GM23248 (cell line): ENCODE measurements at regions of chr4 and their contacts with region 1.

Region 1: DNA sequence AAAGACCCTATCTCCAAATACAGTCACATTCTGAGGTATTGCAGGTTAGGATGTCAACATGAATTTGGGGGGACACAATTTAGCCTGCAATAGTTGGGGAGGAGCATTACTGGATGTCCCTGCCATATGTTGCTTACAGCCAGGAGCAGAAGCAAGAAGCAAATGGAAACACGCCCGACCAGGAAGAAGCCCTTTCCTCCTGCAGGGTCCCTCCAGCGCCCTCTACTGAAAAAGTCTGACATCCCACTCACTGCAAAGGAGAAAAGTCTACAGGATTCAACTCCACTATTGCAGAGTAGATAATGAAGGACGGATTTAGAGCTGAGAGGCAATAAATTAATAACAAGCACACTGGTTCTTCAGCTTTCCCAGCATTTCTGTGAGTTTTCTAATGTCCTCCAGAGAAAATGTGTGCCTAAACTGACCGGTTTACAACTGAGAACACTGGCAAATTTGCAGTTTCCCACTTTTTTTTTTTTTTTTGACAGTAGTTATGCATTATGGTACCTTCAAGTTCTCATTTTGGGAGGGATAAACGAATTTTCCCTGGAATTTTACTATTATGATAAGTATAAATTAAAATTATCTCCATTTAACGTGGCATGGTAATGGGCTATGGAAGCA is 31.7 kb downstream of the COQ2 start:
- DNase-seq: peak; percentile 74
- H3K4me3 ChIP-seq: no peak overlapping the region
- H3K27ac ChIP-seq: no peak overlapping the region
- H3K4me1 ChIP-seq: peaks cover 12% of the 10 kb centered on the region; the same call in 1 of the 2 replicates
- H3K27me3 ChIP-seq: no peaks in the 10 kb centered on the region

Region 2: GRCh38 chr4:83075311-83076095 is 177.4 kb before region 1 on chr4:
- in situ Hi-C with region 1: loop called (anchors 5 kb)
- DNase-seq: peak; percentile 72
- H3K4me3 ChIP-seq: peak overlapping the region; percentile 23
- H3K27ac ChIP-seq: peak overlapping the region; percentile 39; the same call in 1 of the 2 replicates
- H3K4me1 ChIP-seq: peaks cover 22% of the 10 kb centered on the region
- H3K27me3 ChIP-seq: no peaks in the 10 kb centered on the region

Region 3: DNA sequence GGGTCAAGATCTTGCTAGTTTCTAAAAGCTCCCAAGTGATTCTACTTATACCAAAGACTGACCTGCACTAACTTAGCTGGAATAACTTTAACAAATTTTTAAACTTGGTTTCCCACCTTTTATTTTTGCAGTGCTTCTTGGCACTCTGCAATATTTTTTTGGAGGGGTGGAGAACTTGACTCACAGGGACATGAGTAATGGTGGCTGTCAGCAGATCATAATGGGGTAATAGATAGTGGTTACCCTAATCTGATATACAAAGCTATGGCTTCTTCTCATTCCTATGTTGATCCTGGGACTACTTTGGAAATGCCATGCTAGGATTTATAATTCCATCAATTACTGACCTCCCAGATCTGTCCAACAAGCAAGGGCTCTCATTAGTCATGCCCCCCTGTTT is 578.7 kb after region 1 on chr4:
- in situ Hi-C with region 1: no loop called
- DNase-seq: peak; percentile 59
- H3K4me3 ChIP-seq: no peak overlapping the region
- H3K27ac ChIP-seq: no peak overlapping the region
- H3K4me1 ChIP-seq: peaks cover 16% of the 10 kb centered on the region
- H3K27me3 ChIP-seq: no peaks in the 10 kb centered on the region